PC-3 (cell line): ENCODE measurements at regions of chr14 and their contacts with region 1.

Region 1: GRCh38 chr14:61025251-61026223 is 44.5 kb downstream of the SLC38A6 start:
- DNase-seq: peak; percentile 96
- ATAC-seq: peak; percentile 89
- H3K4me3 ChIP-seq: peak overlapping the region; percentile 48
- H3K27ac ChIP-seq: peak overlapping the region; percentile 82
- H3K4me1 ChIP-seq: peaks cover 39% of the 10 kb centered on the region
- H3K27me3 ChIP-seq: no peaks in the 10 kb centered on the region
- CTCF ChIP-seq: peak; percentile 99

Region 2: DNA sequence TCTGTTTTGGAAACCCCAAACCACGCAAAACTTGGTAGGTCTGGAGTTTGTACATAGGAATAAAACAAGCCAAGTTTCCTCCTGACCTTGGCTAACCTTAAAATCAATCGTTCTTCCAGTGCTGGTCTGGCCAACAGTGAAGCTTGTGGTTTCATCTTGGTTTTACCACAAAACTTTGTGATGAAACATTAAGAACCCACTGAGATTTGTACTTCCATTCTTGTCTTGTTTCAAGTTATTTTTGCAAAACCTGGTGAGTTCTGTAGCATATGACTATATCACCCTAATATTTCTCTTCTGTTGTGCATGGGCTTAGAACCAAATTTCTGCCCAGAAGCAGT is 402.6 kb before region 1 on chr14:
- CTCF ChIA-PET with region 1: interaction called, 20 read pairs
- POLR2A ChIA-PET with region 1: no interaction called
- intact Hi-C with region 1: loop called (anchors 1 kb)
- DNase-seq: no peak
- ATAC-seq: no peak
- H3K4me3 ChIP-seq: no peak overlapping the region
- H3K27ac ChIP-seq: no peak overlapping the region
- H3K4me1 ChIP-seq: peaks cover 10% of the 10 kb centered on the region
- H3K27me3 ChIP-seq: no peaks in the 10 kb centered on the region
- CTCF ChIP-seq: no peak

Region 3: DNA sequence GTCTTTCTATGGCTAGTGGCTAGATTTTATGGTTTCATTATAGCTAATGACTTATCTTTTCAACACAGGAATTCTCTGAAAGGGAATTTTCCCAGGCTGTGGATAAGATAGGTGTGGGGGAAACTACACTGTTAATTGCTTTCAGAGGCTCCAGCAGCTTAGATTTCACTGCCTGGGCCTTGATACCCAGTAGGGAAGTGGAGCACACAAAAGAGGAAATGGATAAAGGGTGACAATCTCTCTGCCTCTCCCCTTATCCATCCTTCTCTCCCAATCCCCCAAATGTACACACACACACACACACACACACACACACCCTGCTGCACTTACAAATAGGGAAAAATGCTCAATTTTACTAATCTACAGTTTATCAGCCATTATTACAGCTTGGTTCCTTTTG is 320.4 kb before region 1 on chr14:
- CTCF ChIA-PET with region 1: no interaction called
- POLR2A ChIA-PET with region 1: interaction called, 17 read pairs
- intact Hi-C with region 1: no loop called
- DNase-seq: no peak
- ATAC-seq: no peak
- H3K4me3 ChIP-seq: no peak overlapping the region
- H3K27ac ChIP-seq: no peak overlapping the region
- H3K4me1 ChIP-seq: no peaks in the 10 kb centered on the region
- H3K27me3 ChIP-seq: no peaks in the 10 kb centered on the region
- CTCF ChIP-seq: no peak

Region 4: GRCh38 chr14:60757617-60758016 is 267.9 kb before region 1 on chr14:
- CTCF ChIA-PET with region 1: no interaction called
- POLR2A ChIA-PET with region 1: no interaction called
- intact Hi-C with region 1: loop called (anchors 1 kb)
- DNase-seq: peak; percentile 98
- ATAC-seq: peak; percentile 81
- H3K4me3 ChIP-seq: peak overlapping the region; percentile 41
- H3K27ac ChIP-seq: peak overlapping the region; percentile 78
- H3K4me1 ChIP-seq: peaks cover 59% of the 10 kb centered on the region
- H3K27me3 ChIP-seq: no peaks in the 10 kb centered on the region
- CTCF ChIP-seq: no peak

Region 5: GRCh38 chr14:60926002-60926401 is 99.5 kb before region 1 on chr14:
- CTCF ChIA-PET with region 1: no interaction called
- POLR2A ChIA-PET with region 1: no interaction called
- intact Hi-C with region 1: no loop called
- DNase-seq: no peak
- ATAC-seq: no peak
- H3K4me3 ChIP-seq: no peak overlapping the region
- H3K27ac ChIP-seq: no peak overlapping the region
- H3K4me1 ChIP-seq: peaks cover 9% of the 10 kb centered on the region
- H3K27me3 ChIP-seq: no peaks in the 10 kb centered on the region
- CTCF ChIP-seq: no peak

Region 6: GRCh38 chr14:60951776-60952435 is 73.6 kb before region 1 on chr14:
- CTCF ChIA-PET with region 1: no interaction called
- POLR2A ChIA-PET with region 1: no interaction called
- intact Hi-C with region 1: no loop called
- DNase-seq: no peak
- ATAC-seq: no peak
- H3K4me3 ChIP-seq: no peak overlapping the region
- H3K27ac ChIP-seq: no peak overlapping the region
- H3K4me1 ChIP-seq: no peaks in the 10 kb centered on the region
- H3K27me3 ChIP-seq: no peaks in the 10 kb centered on the region
- CTCF ChIP-seq: no peak

Region 7: GRCh38 chr14:60980811-60981632 is 44.5 kb before region 1 on chr14 and contains the starts of genes SLC38A6 and TRMT5:
- CTCF ChIA-PET with region 1: no interaction called
- POLR2A ChIA-PET with region 1: no interaction called
- intact Hi-C with region 1: loop called (anchors 1 kb)
- DNase-seq: peak; percentile 99
- ATAC-seq: peak; percentile 92
- H3K4me3 ChIP-seq: peak within 1 kb of the TSS; percentile 93
- H3K27ac ChIP-seq: peak within 1 kb of the TSS; percentile 71
- H3K4me1 ChIP-seq: peaks cover 57% of the 10 kb centered on the region
- H3K27me3 ChIP-seq: no peaks in the 10 kb centered on the region
- CTCF ChIP-seq: no peak
- total RNA-seq, gene SLC38A6: 24.8 and 28.0 TPM in 2 replicates
- total RNA-seq, gene TRMT5: 12.8 and 15.8 TPM in 2 replicates

Region 8: GRCh38 chr14:61178226-61179060 is 152.9 kb after region 1 on chr14:
- CTCF ChIA-PET with region 1: no interaction called
- POLR2A ChIA-PET with region 1: no interaction called
- intact Hi-C with region 1: loop called (anchors 1 kb)
- DNase-seq: peak; percentile 99
- ATAC-seq: peak; percentile 91
- H3K4me3 ChIP-seq: peak overlapping the region; percentile 20; the same call in 1 of the 2 replicates
- H3K27ac ChIP-seq: peak overlapping the region; percentile 93
- H3K4me1 ChIP-seq: peaks cover 39% of the 10 kb centered on the region
- H3K27me3 ChIP-seq: no peaks in the 10 kb centered on the region
- CTCF ChIP-seq: no peak